ENCODE measurements at regions of chr9 and their contacts with region 1.

Region 1: DNA sequence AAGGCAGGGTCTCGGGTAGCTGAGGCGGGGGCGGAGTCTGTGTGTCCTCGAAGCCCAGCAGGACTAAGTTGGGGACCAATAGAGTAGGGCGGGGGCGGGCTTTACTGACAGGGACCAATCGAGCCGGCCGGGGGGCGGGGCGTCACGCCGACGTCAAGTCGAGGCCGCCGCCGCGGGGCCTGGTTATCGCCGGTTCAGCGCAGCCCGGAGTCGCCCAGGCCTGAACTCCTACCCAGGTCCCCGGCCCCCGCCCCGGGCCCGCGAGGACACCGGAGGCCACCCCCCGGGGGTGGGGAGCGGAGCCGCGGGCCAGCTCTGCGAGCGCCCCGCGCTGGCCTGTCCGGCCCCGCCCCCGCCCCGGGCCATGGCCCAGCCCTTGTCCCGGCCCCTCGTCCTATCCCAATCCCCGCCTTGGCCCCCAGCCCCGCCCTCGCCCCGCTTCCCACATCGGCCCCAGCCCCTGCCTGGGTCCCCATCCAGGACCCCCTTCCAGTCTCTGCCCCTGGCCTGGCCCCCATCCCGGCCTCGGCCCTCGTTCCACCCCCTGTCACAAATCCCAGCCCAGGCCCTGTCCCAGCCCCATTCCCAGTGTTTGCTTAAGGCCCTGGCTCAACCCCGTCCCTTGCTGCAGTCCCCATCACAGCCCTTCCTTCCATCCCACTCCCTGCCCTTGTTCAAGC is at the start of gene TMEM8B:
- DNase-seq: peak; percentile 91
- H3K4me3 ChIP-seq: peak within 1 kb of the TSS; percentile 54 to 60 (median 60)
- H3K27ac ChIP-seq: peak within 1 kb of the TSS; percentile 34
- H3K4me1 ChIP-seq: peaks cover 9% of the 10 kb centered on the region
- H3K27me3 ChIP-seq: no peaks in the 10 kb centered on the region
- CTCF ChIP-seq: no peak
- POLR2A ChIP-seq: peak; percentile 57
- total RNA-seq, gene TMEM8B: 2.5 and 2.9 TPM in 2 replicates

Region 2: DNA sequence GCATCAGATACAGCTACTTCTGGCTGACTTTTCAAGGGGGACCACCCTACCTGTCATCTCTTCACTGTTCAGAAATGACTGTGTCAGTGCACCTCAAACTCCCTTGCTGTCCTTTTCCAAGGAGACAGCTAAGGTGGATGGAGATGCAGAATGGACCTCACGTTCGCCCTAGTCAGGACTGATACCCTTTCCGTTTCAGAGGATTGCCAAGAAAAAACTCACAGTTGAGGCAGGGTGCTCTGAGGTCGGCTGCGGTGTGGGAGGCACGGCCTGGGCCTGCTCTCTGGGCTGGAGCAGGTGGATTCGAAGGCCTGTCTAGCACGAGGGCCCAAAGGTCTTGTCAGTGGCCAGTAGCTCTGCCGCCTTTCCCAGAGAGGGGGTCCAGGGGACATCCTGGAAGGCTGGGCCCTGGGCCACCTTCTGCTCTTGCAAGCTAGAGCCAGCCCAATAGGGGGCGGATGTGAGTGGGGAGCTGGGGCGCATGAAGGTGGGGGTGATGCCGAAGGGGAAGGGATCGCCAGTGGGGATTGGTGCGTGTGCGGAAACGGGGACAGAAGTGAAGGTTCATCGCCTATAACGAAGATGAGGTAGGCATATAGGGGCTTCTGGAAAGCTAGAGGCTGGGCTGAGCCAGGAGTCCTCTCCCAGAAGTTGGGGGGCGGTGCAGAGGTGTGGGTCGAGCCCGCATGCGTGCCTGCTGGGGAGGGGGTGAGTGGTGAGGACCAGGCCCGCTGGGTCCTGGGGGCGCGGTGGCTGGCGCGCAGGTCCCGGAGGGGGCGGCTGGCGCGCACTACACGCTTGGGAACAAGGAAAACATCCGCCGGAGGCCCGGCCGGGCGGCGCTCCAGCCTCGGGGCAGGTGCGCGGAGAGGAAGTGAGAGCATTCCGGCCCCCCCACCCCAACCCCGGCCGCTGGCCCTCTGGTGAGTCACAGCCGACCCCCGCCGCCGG is 72.7 kb before region 1 on chr9:
- CTCF ChIA-PET with region 1: interaction called, 13 read pairs
- POLR2A ChIA-PET with region 1: no interaction called
- dilution Hi-C with region 1: no loop called
- intact Hi-C with region 1: no loop called
- DNase-seq: peak; percentile 84
- H3K4me3 ChIP-seq: peak overlapping the region in 2 of 3 experiments; percentile 8 to 15
- H3K27ac ChIP-seq: peak overlapping the region; percentile 97
- H3K4me1 ChIP-seq: peaks cover 92% of the 10 kb centered on the region
- H3K27me3 ChIP-seq: no peaks in the 10 kb centered on the region
- CTCF ChIP-seq: peak; percentile 45 to 68
- POLR2A ChIP-seq: no peak

Region 3: DNA sequence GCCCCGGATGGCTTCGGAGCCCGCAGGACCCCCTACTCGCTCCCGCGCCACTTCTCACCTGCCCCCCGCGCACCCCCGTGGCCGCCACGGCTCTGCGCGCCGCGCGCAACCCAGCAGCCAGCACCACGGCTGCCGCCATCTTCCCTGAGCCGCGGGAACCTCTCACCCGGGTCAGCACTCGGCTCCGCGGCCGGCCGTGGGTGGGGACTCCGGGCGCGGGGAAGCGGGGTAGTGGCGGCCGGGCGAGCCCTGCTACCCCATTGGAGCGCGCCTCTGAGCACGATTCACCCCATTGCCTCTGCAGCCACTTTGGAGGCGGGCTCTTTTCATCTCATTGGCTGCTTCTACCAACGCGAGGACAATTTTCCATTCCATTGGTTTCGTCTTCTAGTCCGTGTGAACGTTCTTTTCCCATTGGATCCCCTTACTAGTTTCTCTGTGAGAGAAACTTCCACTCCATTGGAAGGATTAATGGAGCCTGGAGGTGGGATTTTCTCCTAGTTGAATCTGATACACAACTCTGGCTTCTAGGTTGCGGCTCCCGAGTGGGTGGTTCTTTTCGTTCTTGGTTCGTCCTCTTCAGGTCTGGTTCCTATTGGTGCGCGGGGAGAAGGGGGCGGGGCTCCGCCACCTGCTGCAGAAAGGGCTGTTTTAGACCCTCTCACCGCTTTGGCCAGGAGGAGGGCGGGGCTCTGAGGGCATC is 14.2 kb before region 1 on chr9 and contains the start of gene HINT2:
- CTCF ChIA-PET with region 1: interaction called, 10 read pairs
- POLR2A ChIA-PET with region 1: no interaction called
- dilution Hi-C with region 1: no loop called
- intact Hi-C with region 1: loop called (anchors 1 kb)
- DNase-seq: peak; percentile 99
- H3K4me3 ChIP-seq: peak within 1 kb of the TSS; percentile 83 to 89 (median 85)
- H3K27ac ChIP-seq: peak within 1 kb of the TSS; percentile 44
- H3K4me1 ChIP-seq: peaks cover 21% of the 10 kb centered on the region
- H3K27me3 ChIP-seq: no peaks in the 10 kb centered on the region
- CTCF ChIP-seq: no peak
- POLR2A ChIP-seq: peak; percentile 93
- total RNA-seq, gene HINT2: 27.2 and 37.4 TPM in 2 replicates

Region 4: DNA sequence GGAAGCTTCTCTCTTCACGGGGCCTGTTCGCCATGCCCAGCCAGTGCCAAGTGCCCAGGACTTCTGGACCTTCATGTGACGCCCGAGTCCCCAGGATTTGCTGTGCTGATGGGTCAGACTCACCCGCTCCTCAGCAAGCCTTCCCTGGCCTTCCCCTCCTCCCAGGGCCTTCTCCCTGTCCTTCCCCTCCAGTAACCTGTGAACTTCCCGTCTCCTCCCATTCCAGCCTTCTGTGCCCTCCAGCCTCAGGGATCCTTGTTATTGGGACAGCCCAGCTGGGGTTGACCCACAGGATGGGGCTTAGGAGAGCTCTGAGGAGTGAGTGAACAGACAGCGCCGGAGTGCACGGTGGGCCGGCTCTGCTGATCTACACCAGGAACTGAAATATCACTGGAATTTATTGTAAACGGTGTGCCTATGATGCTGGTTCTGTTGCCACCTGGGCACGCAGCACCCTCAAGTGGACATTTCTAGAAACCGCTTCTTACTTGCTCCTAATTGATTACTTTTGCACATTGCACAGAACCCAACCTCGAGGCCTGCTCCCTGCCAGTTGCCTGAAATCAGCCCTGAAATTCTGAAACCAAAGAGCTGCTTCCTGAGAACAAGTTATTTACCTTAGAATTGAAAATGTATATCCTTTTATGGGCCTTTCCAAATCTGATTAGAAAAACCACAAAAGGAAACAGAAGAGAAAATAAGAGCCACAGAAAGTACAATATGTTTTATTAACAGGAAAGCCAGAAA is 81.6 kb after region 1 on chr9:
- CTCF ChIA-PET with region 1: interaction called, 27 read pairs
- POLR2A ChIA-PET with region 1: no interaction called
- dilution Hi-C with region 1: no loop called
- intact Hi-C with region 1: loop called (anchors 1 kb)
- DNase-seq: peak; percentile 86
- H3K4me3 ChIP-seq: peak overlapping the region in 2 of 3 experiments; percentile 4 to 53
- H3K27ac ChIP-seq: peak overlapping the region; percentile 94
- H3K4me1 ChIP-seq: peaks cover 68% of the 10 kb centered on the region
- H3K27me3 ChIP-seq: no peaks in the 10 kb centered on the region
- CTCF ChIP-seq: peak; percentile 60 to 65
- POLR2A ChIP-seq: peak; percentile 61

Region 5: GRCh38 chr9:35932735-35933134 is 103.5 kb after region 1 on chr9:
- CTCF ChIA-PET with region 1: no interaction called
- POLR2A ChIA-PET with region 1: no interaction called
- dilution Hi-C with region 1: no loop called
- intact Hi-C with region 1: no loop called
- DNase-seq: no peak
- H3K4me3 ChIP-seq: no peak overlapping the region
- H3K27ac ChIP-seq: no peak overlapping the region
- H3K4me1 ChIP-seq: peaks cover 9% of the 10 kb centered on the region
- H3K27me3 ChIP-seq: no peaks in the 10 kb centered on the region
- CTCF ChIP-seq: no peak
- POLR2A ChIP-seq: no peak

Region 6: DNA sequence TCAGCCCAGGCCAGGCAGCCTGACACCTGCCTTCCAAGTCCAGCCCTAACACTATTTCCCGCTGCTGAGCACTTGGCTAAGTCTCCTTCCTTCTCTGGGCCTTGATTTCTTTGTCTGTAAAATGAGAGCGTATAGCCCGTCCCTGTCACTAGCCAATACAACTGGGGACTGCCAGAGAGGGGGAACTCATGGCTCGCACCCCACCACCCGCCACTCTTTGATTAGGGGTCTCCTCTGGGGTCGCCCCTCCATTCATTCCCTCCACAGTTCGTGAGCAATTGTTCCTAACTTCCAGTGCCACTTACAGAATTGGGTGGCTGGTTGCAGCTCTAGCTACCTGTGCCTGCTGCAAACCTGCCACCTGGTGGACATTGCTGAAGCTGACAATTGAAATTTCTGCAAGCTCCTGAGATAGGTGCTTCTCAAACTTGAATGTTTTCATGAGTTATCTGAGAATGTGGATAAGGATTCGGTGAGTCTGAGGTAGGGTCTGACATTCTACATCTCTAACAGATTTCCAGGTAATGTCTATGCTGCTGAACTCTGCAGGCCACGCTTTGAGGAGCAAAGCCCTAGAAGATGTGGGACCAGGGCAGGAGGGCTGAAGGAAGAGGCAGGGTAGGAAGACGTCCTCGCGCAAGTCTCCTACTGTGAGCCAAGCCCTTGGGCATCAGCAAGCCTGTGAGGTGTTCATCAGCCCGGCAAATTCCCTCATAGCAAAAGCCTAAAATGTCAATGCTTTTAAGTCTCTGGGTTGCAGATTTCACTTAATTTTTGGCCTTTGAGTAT is 194.2 kb after region 1 on chr9:
- CTCF ChIA-PET with region 1: interaction called, 20 read pairs
- POLR2A ChIA-PET with region 1: no interaction called
- dilution Hi-C with region 1: no loop called
- intact Hi-C with region 1: no loop called
- DNase-seq: peak; percentile 71
- H3K4me3 ChIP-seq: no peak overlapping the region
- H3K27ac ChIP-seq: no peak overlapping the region
- H3K4me1 ChIP-seq: no peaks in the 10 kb centered on the region
- H3K27me3 ChIP-seq: no peaks in the 10 kb centered on the region
- CTCF ChIP-seq: peak; percentile 71 to 79
- POLR2A ChIP-seq: no peak